Sigmoid colon (tissue), 7 donors: ENCODE measurements at regions of chr15 and their contacts with region 1.

Region 1: DNA sequence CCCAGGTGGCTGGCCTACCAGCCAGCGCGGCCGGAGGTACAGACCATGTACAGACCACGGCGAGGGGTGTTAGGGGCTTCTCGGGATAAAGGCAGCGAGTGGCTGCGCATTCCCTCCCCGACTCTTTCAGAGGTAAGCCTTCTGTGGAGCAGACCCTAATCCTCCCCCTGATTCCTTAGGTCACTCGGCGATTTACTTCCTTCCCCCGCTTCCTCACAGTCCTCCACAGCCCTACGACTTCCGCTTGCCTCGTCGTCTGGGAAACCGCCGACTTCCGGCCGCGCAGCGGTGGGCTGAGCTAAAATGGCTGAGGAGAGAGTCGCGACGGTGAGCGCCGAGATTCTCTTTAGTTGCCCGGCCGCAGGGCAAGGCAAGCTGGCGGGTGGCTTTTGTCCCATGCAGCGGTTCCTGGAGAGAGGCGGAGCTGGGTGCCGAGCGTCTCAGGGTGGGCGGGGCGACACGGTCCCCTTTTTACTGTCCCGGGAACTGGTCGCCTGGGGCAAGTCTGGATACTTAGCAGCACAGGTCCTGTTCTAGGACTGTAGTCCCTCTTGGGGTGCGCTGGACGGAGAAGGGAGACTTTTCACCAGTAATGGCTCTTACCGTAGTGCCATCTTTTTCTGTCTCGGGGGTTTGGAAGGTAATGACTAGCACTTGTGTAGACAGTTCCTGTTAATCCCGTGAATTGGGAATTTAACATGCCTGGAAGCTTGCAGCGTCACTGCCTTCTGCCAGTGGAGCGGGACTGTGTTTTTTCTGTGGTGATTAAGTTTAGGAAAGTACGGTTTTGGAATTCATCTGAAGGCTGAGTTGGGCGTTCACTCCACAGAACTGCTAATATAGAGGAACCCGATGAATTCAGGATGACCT is at the starts of genes BBS4 and HIGD2B:
- DNase-seq: peak; percentile 90
- H3K4me3 ChIP-seq: peak within 1 kb of the TSS; percentile 56 to 81 (median 65)
- H3K27ac ChIP-seq: peak within 1 kb of the TSS; percentile 84 to 93 (median 90)
- H3K4me1 ChIP-seq: peaks cover 0 to 15% (median 8%) of the 10 kb centered on the region in 4 donors
- H3K27me3 ChIP-seq: no peaks in the 10 kb centered on the region
- CTCF ChIP-seq: no peak
- EP300 ChIP-seq: no peak
- POLR2A ChIP-seq: peak; percentile 58 to 60
- total RNA-seq, gene BBS4: 18.3 to 34.3 (median 29.0) TPM
- total RNA-seq, gene HIGD2B: not detected

Region 2: DNA sequence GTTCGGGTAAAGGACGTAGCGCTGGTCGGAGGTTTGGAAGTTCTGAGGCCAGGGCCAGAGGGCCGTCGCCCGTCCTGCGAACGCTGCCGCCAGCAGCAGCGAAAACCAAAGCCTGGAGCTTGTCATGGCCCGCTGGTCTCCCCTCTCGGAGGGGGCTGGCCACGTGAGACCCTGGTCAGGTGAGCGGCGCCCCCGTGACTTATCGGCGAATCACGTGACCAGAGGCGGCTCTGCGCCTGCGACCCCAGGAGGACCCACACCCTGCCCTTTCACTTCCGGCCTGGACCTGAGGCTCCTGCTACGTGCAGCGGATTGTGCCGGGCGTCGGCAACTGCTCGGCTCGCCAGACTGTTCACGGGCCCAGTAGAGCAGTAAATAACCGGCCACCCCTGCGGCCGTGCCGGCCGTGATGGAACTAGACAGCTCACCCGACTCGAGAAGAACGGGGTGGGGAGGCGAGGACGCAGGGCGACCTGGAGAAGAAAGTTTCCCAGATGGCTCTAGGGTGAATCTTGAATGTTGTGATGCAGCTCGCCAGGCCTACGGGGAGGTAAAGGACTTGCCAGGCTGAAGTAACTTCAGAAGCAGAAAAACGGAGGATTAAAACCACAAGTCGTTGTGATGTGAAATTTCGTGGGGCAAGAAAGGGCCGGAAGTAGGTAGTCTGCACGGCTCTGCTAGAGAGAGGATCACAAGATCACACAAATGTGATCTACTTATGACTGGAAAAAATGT is 310.1 kb before region 1 on chr15 and contains the start of gene HEXA:
- intact Hi-C with region 1: loop called (anchors 10 kb)
- DNase-seq: peak; percentile 99
- H3K4me3 ChIP-seq: peak within 1 kb of the TSS; percentile 70 to 85 (median 78)
- H3K27ac ChIP-seq: peak within 1 kb of the TSS; percentile 82 to 86 (median 84)
- H3K4me1 ChIP-seq: peaks cover 0 to 33% (median 24%) of the 10 kb centered on the region in 4 donors
- H3K27me3 ChIP-seq: no peaks in the 10 kb centered on the region
- CTCF ChIP-seq: no peak
- EP300 ChIP-seq: peak in 2 of 4 donors; percentile 52 to 79
- POLR2A ChIP-seq: peak; percentile 59 to 74
- total RNA-seq, gene HEXA: 56.0 to 80.0 (median 66.7) TPM

Region 3: GRCh38 chr15:72445426-72445825 is 240.7 kb before region 1 on chr15:
- intact Hi-C with region 1: no loop called
- DNase-seq: no peak
- H3K4me3 ChIP-seq: no peak overlapping the region
- H3K27ac ChIP-seq: no peak overlapping the region
- H3K4me1 ChIP-seq: no peaks in the 10 kb centered on the region
- H3K27me3 ChIP-seq: no peaks in the 10 kb centered on the region
- CTCF ChIP-seq: no peak
- EP300 ChIP-seq: no peak
- POLR2A ChIP-seq: no peak

Region 4: DNA sequence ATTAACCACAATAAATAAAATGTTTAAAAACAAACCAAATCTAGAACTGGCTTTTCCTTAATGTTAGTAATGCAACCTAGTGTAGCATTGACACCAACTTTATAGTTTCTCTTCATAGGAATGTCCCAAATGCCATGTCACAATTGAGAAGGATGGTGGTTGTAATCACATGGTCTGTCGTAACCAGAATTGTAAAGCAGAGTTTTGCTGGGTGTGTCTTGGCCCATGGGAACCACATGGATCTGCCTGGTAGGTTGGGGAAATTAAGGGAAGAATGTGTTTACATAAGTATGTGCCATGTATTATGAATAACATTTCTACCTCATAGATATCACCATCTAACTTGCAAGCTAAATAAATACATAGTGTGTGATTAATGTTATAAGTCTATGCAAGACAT is 116.1 kb before region 1 on chr15:
- intact Hi-C with region 1: no loop called
- DNase-seq: no peak
- H3K4me3 ChIP-seq: no peak overlapping the region
- H3K27ac ChIP-seq: no peak overlapping the region
- H3K4me1 ChIP-seq: no peaks in the 10 kb centered on the region
- H3K27me3 ChIP-seq: no peaks in the 10 kb centered on the region
- CTCF ChIP-seq: no peak
- EP300 ChIP-seq: no peak
- POLR2A ChIP-seq: no peak

Region 5: GRCh38 chr15:72599855-72600464 is 86.2 kb before region 1 on chr15:
- intact Hi-C with region 1: loop called (anchors 10 kb)
- DNase-seq: no peak
- H3K4me3 ChIP-seq: no peak overlapping the region
- H3K27ac ChIP-seq: no peak overlapping the region
- H3K4me1 ChIP-seq: no peaks in the 10 kb centered on the region
- H3K27me3 ChIP-seq: no peaks in the 10 kb centered on the region
- CTCF ChIP-seq: peak in 3 of 4 experiments; percentile 26 to 59 (median 34)
- EP300 ChIP-seq: no peak
- POLR2A ChIP-seq: no peak

Region 6: GRCh38 chr15:73051811-73052678 is 365.9 kb after region 1 on chr15 and contains the start of gene NEO1:
- intact Hi-C with region 1: loop called (anchors 10 kb)
- DNase-seq: peak; percentile 94
- H3K4me3 ChIP-seq: peak within 1 kb of the TSS; percentile 85 to 93 (median 88)
- H3K27ac ChIP-seq: peak within 1 kb of the TSS; percentile 96 to 97 (median 96)
- H3K4me1 ChIP-seq: peaks cover 0 to 32% (median 15%) of the 10 kb centered on the region in 4 donors
- H3K27me3 ChIP-seq: no peaks in the 10 kb centered on the region
- CTCF ChIP-seq: no peak
- EP300 ChIP-seq: no peak
- POLR2A ChIP-seq: peak; percentile 26 to 48
- total RNA-seq, gene NEO1: 19.3 to 42.1 (median 26.8) TPM